ENCODE measurements at regions of chr15 and their contacts with region 1.

Region 1: GRCh38 chr15:66497502-66498455 is at the start of gene SNAPC5:
- DNase-seq: peak; percentile 95 to 98 (median 96)
- H3K4me3 ChIP-seq: peak within 1 kb of the TSS; percentile 48 to 82 (median 67)
- H3K27ac ChIP-seq: peak within 1 kb of the TSS in 4 of 5 donors; percentile 72 to 90 (median 78)
- H3K4me1 ChIP-seq: peaks cover 8 to 27% of the 10 kb centered on the region in 2 donors
- H3K27me3 ChIP-seq: no peaks in the 10 kb centered on the region
- CTCF ChIP-seq: peak; percentile 97 to 99 (median 98)
- POLR2A ChIP-seq: peak; percentile 52 to 65
- total RNA-seq, gene SNAPC5: 24.4 to 64.1 (median 31.1) TPM

Region 2: GRCh38 chr15:66386204-66387123 is 111.3 kb before region 1 on chr15 and contains the start of gene MAP2K1:
- intact Hi-C with region 1: loop called (anchors 5 kb)
- DNase-seq: peak; percentile 98 to 99 (median 99)
- H3K4me3 ChIP-seq: peak within 1 kb of the TSS; percentile 3 to 93 (median 37)
- H3K27ac ChIP-seq: peak within 1 kb of the TSS; percentile 48 to 97 (median 94)
- H3K4me1 ChIP-seq: peaks cover 8 to 21% of the 10 kb centered on the region in 2 donors
- H3K27me3 ChIP-seq: no peaks in the 10 kb centered on the region
- CTCF ChIP-seq: peak; percentile 35 to 67 (median 60)
- POLR2A ChIP-seq: peak; percentile 29 to 83
- total RNA-seq, gene MAP2K1: 39.5 to 60.0 (median 46.1) TPM

Region 3: DNA sequence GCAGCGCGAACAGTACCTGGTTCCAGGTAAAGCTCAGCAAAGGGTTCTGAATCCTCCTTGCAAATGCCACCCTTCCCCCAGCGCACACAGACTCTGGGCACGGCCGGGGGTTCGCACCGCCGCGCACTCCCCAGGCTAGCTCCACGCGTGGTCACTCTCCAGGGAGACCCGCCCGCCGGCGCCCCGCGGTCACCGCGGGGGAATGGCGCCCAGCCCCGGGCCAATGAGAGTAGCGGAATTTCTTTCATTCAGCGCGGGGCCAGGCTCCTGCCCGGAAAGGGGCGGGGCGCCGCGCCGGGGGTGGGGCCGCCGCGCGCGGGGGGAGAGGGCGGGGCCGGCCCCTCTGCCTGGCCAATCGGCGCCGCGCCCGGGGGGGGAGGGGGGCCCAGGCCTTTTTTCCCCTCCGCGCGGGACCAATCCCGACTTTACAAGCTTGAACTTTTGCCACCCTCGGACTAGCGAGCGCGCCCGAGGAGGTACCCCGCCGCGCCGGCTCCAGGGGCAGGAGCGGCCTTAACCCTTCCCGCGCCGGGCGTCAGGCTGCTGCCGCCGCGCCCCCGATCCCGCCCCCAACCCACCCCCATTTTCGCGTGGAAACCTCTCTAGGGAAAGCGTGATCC is 203.1 kb after region 1 on chr15:
- intact Hi-C with region 1: no loop called
- DNase-seq: peak; percentile 96 to 98 (median 97)
- H3K4me3 ChIP-seq: peak overlapping the region in 3 of 4 donors; percentile 19 to 67 (median 58)
- H3K27ac ChIP-seq: peak overlapping the region in 4 of 5 donors; percentile 42 to 90 (median 61)
- H3K4me1 ChIP-seq: peaks cover 4 to 19% of the 10 kb centered on the region in 2 donors
- H3K27me3 ChIP-seq: no peaks in the 10 kb centered on the region
- CTCF ChIP-seq: no peak
- POLR2A ChIP-seq: peak in 1 of 2 donors; percentile 23